Lower leg skin (tissue), 4 donors: ENCODE measurements at regions of chr2 and their contacts with region 1.

Region 1: DNA sequence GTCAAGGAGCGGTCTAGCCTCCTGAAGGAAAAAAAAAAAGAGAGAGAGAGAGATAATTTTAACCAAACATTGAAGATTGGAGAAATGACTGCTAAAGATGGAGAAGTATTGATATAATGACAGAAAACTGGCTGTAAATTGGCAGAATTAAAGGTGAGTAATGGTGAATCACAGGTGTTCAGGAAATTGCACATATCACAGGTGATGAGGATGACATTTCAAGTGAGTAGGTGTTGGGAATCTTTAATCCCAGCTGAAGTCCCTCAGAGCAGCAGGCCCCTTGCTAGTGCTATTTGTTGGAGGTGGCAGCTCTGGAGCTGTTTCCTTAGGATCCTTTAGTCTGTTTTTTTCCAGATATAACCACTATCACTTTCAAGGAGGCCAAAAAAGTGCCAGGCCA is 678.4 kb upstream of the VRK2 start:
- DNase-seq: no peak
- H3K4me3 ChIP-seq: no peak overlapping the region
- CTCF ChIP-seq: no peak
- POLR2A ChIP-seq: no peak

Region 2: GRCh38 chr2:59249441-59250306 is 1881.5 kb after region 1 on chr2:
- intact Hi-C with region 1: loop called (anchors 5 kb)
- DNase-seq: no peak
- H3K4me3 ChIP-seq: no peak overlapping the region
- CTCF ChIP-seq: no peak
- POLR2A ChIP-seq: no peak